Activated CD4-positive, alpha-beta memory T cell treated with anti-CD3 and anti-CD28 coated beads for 36 hours (primary cell): ENCODE measurements at regions of chr14 and their contacts with region 1.

Region 1: GRCh38 chr14:29548948-29549370 is 378.7 kb downstream of the PRKD1 start:
- DNase-seq: no peak
- H3K4me3 Mint-ChIP-seq: no peak overlapping the region
- H3K27ac Mint-ChIP-seq: no peak overlapping the region
- H3K4me1 Mint-ChIP-seq: no peaks in the 10 kb centered on the region
- H3K27me3 Mint-ChIP-seq: no peaks in the 10 kb centered on the region

Region 2: GRCh38 chr14:29493849-29494248 is 55.1 kb before region 1 on chr14:
- CTCF ChIA-PET with region 1: no interaction called
- POLR2A ChIA-PET with region 1: no interaction called
- intact Hi-C with region 1: no loop called
- DNase-seq: no peak
- H3K4me3 Mint-ChIP-seq: no peak overlapping the region
- H3K27ac Mint-ChIP-seq: no peak overlapping the region
- H3K4me1 Mint-ChIP-seq: no peaks in the 10 kb centered on the region
- H3K27me3 Mint-ChIP-seq: no peaks in the 10 kb centered on the region

Region 3: GRCh38 chr14:29710015-29710565 is 161.1 kb after region 1 on chr14:
- CTCF ChIA-PET with region 1: no interaction called
- POLR2A ChIA-PET with region 1: no interaction called
- intact Hi-C with region 1: no loop called
- DNase-seq: no peak
- H3K4me3 Mint-ChIP-seq: no peak overlapping the region
- H3K27ac Mint-ChIP-seq: no peak overlapping the region
- H3K4me1 Mint-ChIP-seq: no peaks in the 10 kb centered on the region
- H3K27me3 Mint-ChIP-seq: no peaks in the 10 kb centered on the region

Region 4: DNA sequence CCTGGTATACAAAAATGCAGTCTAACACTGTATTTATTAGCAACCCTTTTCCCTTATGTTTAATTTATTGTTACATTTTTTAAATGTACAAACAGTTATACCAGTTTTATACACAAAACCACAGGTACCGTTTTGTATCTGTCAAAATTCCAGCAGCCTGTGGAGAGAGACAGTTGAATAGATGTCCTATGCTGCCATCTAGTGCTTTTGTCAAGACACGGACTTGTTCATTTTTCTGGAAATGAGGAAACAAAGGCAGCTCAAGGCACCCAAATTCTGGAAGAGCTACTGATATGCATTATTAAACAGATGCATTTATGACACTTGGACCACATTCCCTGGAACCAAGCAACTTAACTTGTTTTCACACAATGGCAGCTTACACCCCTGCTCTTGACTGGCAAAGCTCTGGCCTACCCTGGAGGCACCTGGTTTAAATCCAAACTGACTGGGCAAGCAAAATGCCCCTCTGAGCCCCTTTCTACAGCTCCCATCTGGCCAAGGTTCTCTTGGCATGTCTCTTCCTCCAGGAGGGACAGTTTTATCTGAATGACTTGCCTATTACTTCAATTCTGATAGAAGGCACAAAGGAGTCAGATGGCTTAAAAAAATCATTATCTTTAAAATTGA is 665.6 kb after region 1 on chr14:
- CTCF ChIA-PET with region 1: interaction called, 4 read pairs
- POLR2A ChIA-PET with region 1: no interaction called
- intact Hi-C with region 1: loop called (anchors 5 kb)
- DNase-seq: no peak
- H3K4me3 Mint-ChIP-seq: no peak overlapping the region
- H3K27ac Mint-ChIP-seq: no peak overlapping the region
- H3K4me1 Mint-ChIP-seq: no peaks in the 10 kb centered on the region
- H3K27me3 Mint-ChIP-seq: no peaks in the 10 kb centered on the region